ENCODE measurements at regions of chr5 and their contacts with region 1.

Region 1: DNA sequence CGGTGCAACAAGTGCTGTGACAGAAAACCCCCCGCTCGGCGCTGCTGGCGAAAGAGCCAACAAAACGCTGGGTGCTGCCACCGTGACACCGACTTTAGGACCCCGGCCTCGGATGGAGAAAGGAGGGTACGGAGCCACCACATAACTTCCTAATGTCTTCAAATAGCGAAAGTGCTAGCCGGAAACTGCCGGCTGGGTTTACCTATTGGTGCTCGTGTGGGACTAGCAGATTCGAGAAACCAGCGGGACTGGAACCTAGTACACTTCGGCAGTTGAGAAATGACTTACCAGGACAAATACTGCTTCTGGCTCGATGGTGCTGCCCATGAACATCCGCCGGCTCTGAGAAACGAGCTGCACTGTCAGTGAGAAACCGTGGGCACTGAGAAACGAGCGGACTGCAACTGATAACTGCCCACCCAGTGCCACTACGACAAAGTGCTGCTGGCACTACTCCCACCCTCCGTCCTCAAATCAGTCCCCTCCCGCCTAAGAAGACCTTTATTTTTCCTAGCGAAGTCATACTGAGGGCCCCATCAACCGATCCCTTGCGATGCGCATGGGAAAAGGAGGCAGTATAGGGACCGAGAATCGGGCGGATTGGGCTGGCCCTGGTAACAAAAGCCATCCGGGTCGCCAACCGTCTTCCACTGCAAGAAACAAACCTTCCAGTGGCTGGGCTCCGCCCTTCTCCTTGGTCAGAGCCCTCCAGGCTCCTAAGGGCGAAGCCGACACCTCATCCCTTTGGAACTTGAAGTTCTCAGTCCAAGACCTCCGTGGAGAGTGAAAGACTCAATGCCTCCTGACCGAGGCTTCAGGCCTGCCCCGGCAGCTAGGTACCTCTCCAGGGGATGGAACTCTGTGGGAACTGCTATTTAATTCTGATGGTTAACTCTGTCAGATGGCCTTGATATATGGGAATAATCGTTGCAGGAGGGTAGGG is 27.0 kb upstream of the ANXA2R start:
- DNase-seq: peak; percentile 91
- ATAC-seq: peak; percentile 59
- H3K4me3 Mint-ChIP-seq: peak overlapping the region; percentile 94
- H3K27ac Mint-ChIP-seq: peak overlapping the region; percentile 99
- H3K4me1 Mint-ChIP-seq: peaks cover 43% of the 10 kb centered on the region
- H3K27me3 Mint-ChIP-seq: no peaks in the 10 kb centered on the region

Region 2: GRCh38 chr5:42994246-42995151 is 72.6 kb before region 1 on chr5:
- CTCF ChIA-PET with region 1: interaction called, 8 read pairs
- POLR2A ChIA-PET with region 1: interaction called, 136 read pairs
- DNase-seq: peak; percentile 94
- ATAC-seq: peak; percentile 60
- H3K4me3 Mint-ChIP-seq: peak overlapping the region; percentile 94
- H3K27ac Mint-ChIP-seq: peak overlapping the region; percentile 99
- H3K4me1 Mint-ChIP-seq: peaks cover 19% of the 10 kb centered on the region
- H3K27me3 Mint-ChIP-seq: no peaks in the 10 kb centered on the region

Region 3: GRCh38 chr5:43008369-43009153 is 58.5 kb before region 1 on chr5:
- CTCF ChIA-PET with region 1: interaction called, 6 read pairs
- POLR2A ChIA-PET with region 1: interaction called, 85 read pairs
- DNase-seq: peak; percentile 94
- ATAC-seq: peak; percentile 71
- H3K4me3 Mint-ChIP-seq: peak overlapping the region; percentile 90
- H3K27ac Mint-ChIP-seq: peak overlapping the region; percentile 98
- H3K4me1 Mint-ChIP-seq: peaks cover 44% of the 10 kb centered on the region
- H3K27me3 Mint-ChIP-seq: peaks cover 1% of the 10 kb centered on the region

Region 4: DNA sequence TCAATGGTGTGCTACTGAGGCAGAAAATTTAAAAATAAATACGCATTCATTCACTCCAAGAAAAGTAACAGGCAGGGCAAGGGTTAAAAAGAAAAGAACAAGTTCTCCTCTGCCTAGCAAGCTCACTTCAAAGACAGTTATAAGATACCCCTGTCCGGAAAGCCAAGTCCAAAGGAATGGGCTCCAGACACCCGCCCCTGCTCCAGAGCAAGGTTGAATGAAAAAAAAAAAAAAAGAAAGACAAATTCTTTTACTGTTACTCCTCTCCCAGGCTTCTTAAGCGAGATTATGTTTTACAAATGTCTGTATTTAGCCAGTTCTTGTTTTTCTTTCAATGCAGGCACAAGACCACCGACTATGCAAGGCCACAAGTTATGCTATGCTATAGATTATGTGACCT is 17.8 kb before region 1 on chr5:
- CTCF ChIA-PET with region 1: interaction called, 19 read pairs
- POLR2A ChIA-PET with region 1: interaction called, 243 read pairs
- DNase-seq: no peak
- ATAC-seq: no peak
- H3K4me3 Mint-ChIP-seq: no peak overlapping the region
- H3K27ac Mint-ChIP-seq: no peak overlapping the region
- H3K4me1 Mint-ChIP-seq: peaks cover 42% of the 10 kb centered on the region
- H3K27me3 Mint-ChIP-seq: no peaks in the 10 kb centered on the region

Region 5: DNA sequence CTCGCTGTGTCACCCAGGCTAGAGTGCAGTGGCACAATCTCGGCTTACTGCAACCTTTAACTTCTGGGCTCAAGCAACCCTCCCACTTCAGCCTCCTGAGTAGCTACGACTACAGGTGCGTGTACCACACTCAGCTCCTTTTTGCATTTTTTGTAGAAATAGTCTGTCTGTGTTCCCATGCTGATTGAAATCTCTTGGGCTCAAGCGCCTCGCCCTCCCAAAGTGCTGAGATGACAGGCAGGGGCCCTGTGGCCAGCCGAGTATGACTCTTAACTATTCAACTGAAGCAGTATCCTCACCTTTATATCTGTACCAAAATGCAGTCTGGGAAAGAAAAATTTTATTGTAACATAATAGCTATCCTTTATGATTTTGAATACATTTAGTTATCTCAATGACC is 112.8 kb after region 1 on chr5:
- CTCF ChIA-PET with region 1: no interaction called
- POLR2A ChIA-PET with region 1: no interaction called
- DNase-seq: no peak
- ATAC-seq: no peak
- H3K4me3 Mint-ChIP-seq: no peak overlapping the region
- H3K27ac Mint-ChIP-seq: no peak overlapping the region
- H3K4me1 Mint-ChIP-seq: no peaks in the 10 kb centered on the region
- H3K27me3 Mint-ChIP-seq: no peaks in the 10 kb centered on the region

Measured in activated CD8-positive, alpha-beta T cell treated with anti-CD3 and anti-CD28 coated beads, Interleukin-2, amount 10 ng/mL, durations not matched to agents 7 days and 5 days (primary cell).